Panc1 (cell line): ENCODE measurements at regions of chr3 and their contacts with region 1.

Region 1: GRCh38 chr3:102018551-102018950 is 169.2 kb downstream of the NFKBIZ start:
- DNase-seq: no peak
- ATAC-seq: no peak
- H3K4me3 ChIP-seq: no peak overlapping the region
- H3K27ac ChIP-seq: no peak overlapping the region
- H3K4me1 ChIP-seq: no peaks in the 10 kb centered on the region
- H3K27me3 ChIP-seq: no peaks in the 10 kb centered on the region
- CTCF ChIP-seq: no peak

Region 2: GRCh38 chr3:102195198-102195948 is 176.8 kb after region 1 on chr3:
- CTCF ChIA-PET with region 1: no interaction called
- POLR2A ChIA-PET with region 1: no interaction called
- in situ Hi-C with region 1: no loop called
- intact Hi-C with region 1: loop called (anchors 10 kb)
- DNase-seq: no peak
- ATAC-seq: no peak
- H3K4me3 ChIP-seq: no peak overlapping the region
- H3K27ac ChIP-seq: no peak overlapping the region
- H3K4me1 ChIP-seq: no peaks in the 10 kb centered on the region
- H3K27me3 ChIP-seq: no peaks in the 10 kb centered on the region
- CTCF ChIP-seq: no peak